Left cardiac atrium (tissue), 4 donors: ENCODE measurements at regions of chr4 and their contacts with region 1.

Region 1: DNA sequence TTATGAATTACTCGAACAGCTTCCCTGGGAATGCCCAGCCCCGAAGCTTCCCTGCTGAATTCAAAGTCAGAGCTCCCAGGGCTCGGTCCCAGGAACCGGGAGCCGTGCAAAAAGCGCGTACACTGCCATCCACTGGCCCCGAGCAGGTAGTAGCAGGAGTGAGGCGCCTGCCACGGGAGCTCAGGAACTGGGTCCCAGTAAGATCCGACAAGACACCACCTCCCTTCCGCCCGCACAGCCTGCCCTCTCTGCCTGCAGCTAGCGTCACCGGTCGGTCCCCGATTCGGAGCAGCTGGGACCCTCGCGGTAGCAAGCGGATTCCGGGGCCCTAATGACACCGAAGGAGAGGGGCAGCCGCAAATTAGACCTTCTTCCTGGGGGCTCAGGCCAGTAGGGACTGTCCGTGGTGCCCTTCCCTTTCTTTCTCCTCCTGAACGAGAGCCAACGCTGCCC is 1.2 kb downstream of the CORIN start:
- DNase-seq: peak; percentile 88
- ATAC-seq: peak; percentile 90 to 94

Region 2: DNA sequence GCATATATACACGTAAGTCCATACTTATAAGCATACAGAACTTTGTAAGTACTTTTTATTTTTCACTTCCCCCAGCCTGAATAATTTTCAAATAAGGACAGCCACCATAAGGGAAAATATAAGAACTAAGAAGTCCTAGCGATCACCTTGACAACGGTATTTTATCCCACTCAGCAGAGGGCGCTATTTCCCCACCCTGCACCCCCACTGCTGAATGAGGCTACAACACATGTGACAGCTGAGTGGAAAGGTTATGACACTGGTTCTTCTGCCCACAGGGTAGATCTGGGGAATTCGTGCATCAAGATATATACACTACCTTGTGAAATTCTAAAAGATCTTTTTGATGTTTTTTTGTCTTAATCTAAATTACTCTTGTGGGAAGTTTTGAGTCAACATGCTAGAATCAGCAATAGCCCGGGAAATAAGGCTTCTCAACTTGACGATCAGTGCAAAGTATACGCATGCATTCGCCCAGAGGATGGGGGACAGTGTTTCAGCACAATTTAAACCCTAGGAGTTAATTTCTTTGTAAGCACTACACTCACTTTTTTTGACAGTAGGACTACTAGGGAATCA is 150.3 kb before region 1 on chr4:
- intact Hi-C with region 1: loop called (anchors 5 kb)
- DNase-seq: peak; percentile 36
- ATAC-seq: peak; percentile 75 to 76

Region 3: DNA sequence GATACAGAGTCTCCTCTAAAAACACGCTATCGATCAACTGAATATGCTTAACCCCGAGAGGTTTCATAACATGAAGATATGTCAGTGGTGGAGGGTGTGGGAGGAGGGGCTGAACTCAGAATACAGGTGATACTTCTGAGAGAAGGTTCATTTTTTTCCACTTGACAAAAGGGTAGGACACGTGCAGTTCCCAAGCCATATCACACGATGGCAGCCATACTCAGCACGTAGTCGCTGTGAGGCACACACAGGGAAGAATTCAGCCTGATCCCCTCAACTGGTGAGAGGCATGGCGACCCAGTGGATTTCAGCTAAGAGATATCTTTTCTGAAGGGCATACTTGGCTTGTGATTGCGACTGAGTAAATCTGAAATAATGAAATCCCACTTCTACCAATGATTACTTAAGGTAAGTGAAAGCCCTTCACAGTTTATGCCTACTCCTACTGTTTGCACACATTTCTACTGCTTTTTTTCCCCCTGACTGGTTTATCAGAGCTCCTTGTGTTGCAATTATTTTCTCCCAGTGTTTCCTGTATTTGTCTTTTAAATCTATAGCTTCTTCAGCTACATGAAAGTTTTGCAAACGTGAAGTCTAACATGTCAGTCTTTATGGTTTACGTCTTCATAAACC is 131.9 kb before region 1 on chr4:
- intact Hi-C with region 1: loop called (anchors 1 to 5 kb)
- DNase-seq: peak; percentile 40
- ATAC-seq: peak; percentile 88 to 95

Region 4: GRCh38 chr4:47762376-47763266 is 74.0 kb before region 1 on chr4:
- intact Hi-C with region 1: no loop called
- DNase-seq: no peak
- ATAC-seq: peak in 1 of 2 donors; percentile 66

Region 5: GRCh38 chr4:47788126-47788525 is 48.5 kb before region 1 on chr4:
- intact Hi-C with region 1: no loop called
- DNase-seq: no peak
- ATAC-seq: no peak

Region 6: GRCh38 chr4:47914220-47914925 is 77.7 kb after region 1 on chr4 and contains the start of gene NFXL1:
- intact Hi-C with region 1: loop called in 1 of 2 experiments (anchors 5 kb)
- DNase-seq: peak; percentile 99
- ATAC-seq: peak; percentile 99 to 100
- total RNA-seq, gene NFXL1: 4.3 to 8.6 TPM